Right lobe of liver (tissue), 6 donors: ENCODE measurements at regions of chr13 and their contacts with region 1.

Region 1: DNA sequence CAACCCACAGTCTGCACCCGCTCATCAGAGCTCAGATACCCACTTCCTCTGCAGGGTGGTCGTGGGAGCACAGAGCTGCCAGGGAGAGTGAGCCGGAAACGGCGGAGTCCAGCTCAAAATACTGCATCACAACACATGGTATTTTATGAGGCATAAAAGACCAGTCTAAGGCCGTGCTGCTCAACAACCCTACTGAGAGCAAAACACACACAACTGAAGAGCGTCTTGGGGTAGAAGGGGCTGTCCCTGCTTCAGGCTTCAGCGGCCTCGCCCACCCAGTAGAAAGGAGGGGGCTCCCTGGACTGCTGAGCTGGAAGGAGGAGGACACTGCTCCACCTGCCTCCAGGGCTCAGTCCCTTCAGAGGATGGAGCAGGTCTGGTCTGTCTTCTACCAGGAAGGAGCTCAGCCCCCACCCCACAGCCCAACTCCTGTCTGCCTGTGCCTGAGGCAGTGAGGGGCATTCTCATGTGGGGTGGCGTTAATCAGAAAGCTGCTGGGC is 36.9 kb downstream of the NAXD start:
- DNase-seq: no peak
- ATAC-seq: no peak
- H3K4me3 ChIP-seq: no peak overlapping the region
- H3K27ac ChIP-seq: no peak overlapping the region
- H3K4me1 ChIP-seq: no peaks in the 10 kb centered on the region
- H3K27me3 ChIP-seq: no peaks in the 10 kb centered on the region
- CTCF ChIP-seq: no peak
- POLR2A ChIP-seq: no peak

Region 2: GRCh38 chr13:111484141-111484925 is 832.1 kb after region 1 on chr13:
- intact Hi-C with region 1: loop called in 1 of 2 experiments (anchors 10 kb)
- DNase-seq: peak in 1 of 3 donors; percentile 23
- ATAC-seq: no peak
- H3K4me3 ChIP-seq: no peak overlapping the region
- H3K27ac ChIP-seq: no peak overlapping the region
- H3K4me1 ChIP-seq: no peaks in the 10 kb centered on the region
- H3K27me3 ChIP-seq: no peaks in the 10 kb centered on the region
- CTCF ChIP-seq: no peak
- POLR2A ChIP-seq: no peak